ENCODE measurements at regions of chr6 and their contacts with region 1.

Region 1: GRCh38 chr6:16761471-16762267 is 409 bp upstream of the ATXN1 start:
- DNase-seq: peak; percentile 85 to 88
- ATAC-seq: peak; percentile 49 to 54
- H3K4me3 ChIP-seq: peak overlapping the region; percentile 85 to 97 (median 91)
- H3K27ac ChIP-seq: peak overlapping the region; percentile 96 to 99 (median 98)
- H3K4me1 ChIP-seq: peaks cover 31 to 32% of the 10 kb centered on the region in 2 donors
- H3K27me3 ChIP-seq: no peaks in the 10 kb centered on the region
- CTCF ChIP-seq: peak in 4 of 5 experiments; percentile 12 to 31 (median 16)
- POLR2A ChIP-seq: peak; percentile 40 to 57

Region 2: GRCh38 chr6:15790116-15790515 is 971.6 kb before region 1 on chr6:
- in situ Hi-C with region 1: no loop called
- intact Hi-C with region 1: no loop called
- DNase-seq: no peak
- ATAC-seq: no peak
- H3K4me3 ChIP-seq: no peak overlapping the region
- H3K27ac ChIP-seq: no peak overlapping the region
- H3K4me1 ChIP-seq: peaks cover 35 to 40% of the 10 kb centered on the region in 2 donors
- H3K27me3 ChIP-seq: no peaks in the 10 kb centered on the region
- CTCF ChIP-seq: no peak
- POLR2A ChIP-seq: no peak

Region 3: GRCh38 chr6:16128759-16129622 is 632.7 kb before region 1 on chr6 and contains the start of gene MYLIP:
- in situ Hi-C with region 1: no loop called
- intact Hi-C with region 1: loop called (anchors 10 kb)
- DNase-seq: peak; percentile 98
- ATAC-seq: peak; percentile 76 to 81
- H3K4me3 ChIP-seq: peak within 1 kb of the TSS; percentile 92 to 99 (median 95)
- H3K27ac ChIP-seq: peak within 1 kb of the TSS; percentile 98 to 100 (median 99)
- H3K4me1 ChIP-seq: peaks cover 42 to 43% of the 10 kb centered on the region in 2 donors
- H3K27me3 ChIP-seq: no peaks in the 10 kb centered on the region
- CTCF ChIP-seq: peak; percentile 77 to 93 (median 78)
- POLR2A ChIP-seq: peak; percentile 100
- total RNA-seq, gene MYLIP: 8.9 to 28.6 (median 18.3) TPM

Region 4: DNA sequence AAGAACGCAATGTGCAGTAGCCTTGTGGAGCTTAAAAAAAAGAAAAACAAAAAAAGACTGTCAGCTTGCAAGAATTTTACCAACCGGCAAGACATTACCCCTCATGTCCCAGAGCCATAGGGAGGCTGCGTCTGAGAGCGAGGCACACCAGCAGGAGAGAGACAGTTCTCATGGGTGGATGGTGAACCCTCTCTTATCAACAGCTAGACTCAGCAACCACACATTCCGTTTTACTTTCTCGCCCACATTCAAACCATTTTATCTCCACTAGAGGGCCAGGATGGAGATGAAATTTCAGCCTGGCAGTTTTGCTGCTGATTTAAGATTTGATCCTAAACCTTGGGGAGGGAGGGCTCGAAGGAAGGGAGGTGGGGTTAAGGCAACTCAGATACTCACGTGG is 247.4 kb before region 1 on chr6:
- in situ Hi-C with region 1: loop called in 3 of 4 experiments (anchors 5 to 10 kb)
- intact Hi-C with region 1: loop called (anchors 1 kb)
- DNase-seq: no peak
- ATAC-seq: peak in 1 of 2 donors; percentile 58
- H3K4me3 ChIP-seq: no peak overlapping the region
- H3K27ac ChIP-seq: no peak overlapping the region
- H3K4me1 ChIP-seq: peaks cover 37% of the 10 kb centered on the region in 2 donors
- H3K27me3 ChIP-seq: no peaks in the 10 kb centered on the region
- CTCF ChIP-seq: peak; percentile 33 to 50 (median 36)
- POLR2A ChIP-seq: no peak

Region 5: GRCh38 chr6:16576451-16577368 is 185.0 kb before region 1 on chr6:
- in situ Hi-C with region 1: no loop called
- intact Hi-C with region 1: no loop called
- DNase-seq: peak; percentile 16 to 26
- ATAC-seq: peak; percentile 85 to 87
- H3K4me3 ChIP-seq: no peak overlapping the region
- H3K27ac ChIP-seq: peak overlapping the region in 1 of 4 donors; percentile 46
- H3K4me1 ChIP-seq: peaks cover 8% of the 10 kb centered on the region in 2 donors
- H3K27me3 ChIP-seq: no peaks in the 10 kb centered on the region
- CTCF ChIP-seq: no peak
- POLR2A ChIP-seq: no peak

Region 6: GRCh38 chr6:16657768-16658167 is 103.9 kb before region 1 on chr6:
- in situ Hi-C with region 1: no loop called
- intact Hi-C with region 1: loop called (anchors 2 kb)
- DNase-seq: no peak
- ATAC-seq: no peak
- H3K4me3 ChIP-seq: no peak overlapping the region
- H3K27ac ChIP-seq: peak overlapping the region in 1 of 4 donors; percentile 58
- H3K4me1 ChIP-seq: peaks cover 26 to 31% of the 10 kb centered on the region in 2 donors
- H3K27me3 ChIP-seq: no peaks in the 10 kb centered on the region
- CTCF ChIP-seq: no peak
- POLR2A ChIP-seq: no peak

Region 7: GRCh38 chr6:16684896-16685554 is 76.6 kb before region 1 on chr6:
- in situ Hi-C with region 1: no loop called
- intact Hi-C with region 1: loop called (anchors 5 kb)
- DNase-seq: no peak
- ATAC-seq: no peak
- H3K4me3 ChIP-seq: no peak overlapping the region
- H3K27ac ChIP-seq: no peak overlapping the region
- H3K4me1 ChIP-seq: peaks cover 47 to 56% of the 10 kb centered on the region in 2 donors
- H3K27me3 ChIP-seq: no peaks in the 10 kb centered on the region
- CTCF ChIP-seq: no peak
- POLR2A ChIP-seq: no peak

Region 8: GRCh38 chr6:16741112-16742016 is 20.3 kb before region 1 on chr6:
- in situ Hi-C with region 1: no loop called
- intact Hi-C with region 1: loop called (anchors 2 kb)
- DNase-seq: no peak
- ATAC-seq: peak; percentile 55 to 83
- H3K4me3 ChIP-seq: no peak overlapping the region
- H3K27ac ChIP-seq: peak overlapping the region; percentile 69 to 83 (median 80)
- H3K4me1 ChIP-seq: peaks cover 64 to 68% of the 10 kb centered on the region in 2 donors
- H3K27me3 ChIP-seq: no peaks in the 10 kb centered on the region
- CTCF ChIP-seq: no peak
- POLR2A ChIP-seq: peak in 1 of 2 donors; percentile 60

Region 9: GRCh38 chr6:17706580-17707370 is 945.1 kb after region 1 on chr6 and contains the start of gene NUP153:
- in situ Hi-C with region 1: no loop called
- intact Hi-C with region 1: loop called (anchors 10 kb)
- DNase-seq: peak; percentile 97 to 99
- ATAC-seq: peak; percentile 82 to 86
- H3K4me3 ChIP-seq: peak within 1 kb of the TSS; percentile 66 to 96 (median 92)
- H3K27ac ChIP-seq: peak within 1 kb of the TSS; percentile 96 to 100 (median 99)
- H3K4me1 ChIP-seq: peaks cover 29 to 30% of the 10 kb centered on the region in 2 donors
- H3K27me3 ChIP-seq: no peaks in the 10 kb centered on the region
- CTCF ChIP-seq: peak in 2 of 5 experiments; percentile 27 to 30
- POLR2A ChIP-seq: peak; percentile 93 to 96
- total RNA-seq, gene NUP153: 29.7 to 44.2 (median 37.9) TPM

Measured in gastrocnemius medialis (tissue), 4 donors.